ENCODE measurements at regions of chr2 and their contacts with region 1.

Region 1: GRCh38 chr2:72198532-72199241 is 51.0 kb upstream of the CYP26B1 start:
- DNase-seq: no peak
- H3K4me3 ChIP-seq: no peak overlapping the region
- H3K27ac ChIP-seq: no peak overlapping the region
- H3K4me1 ChIP-seq: 0 out of 2 replicates have a peak, but pooled peaks cover 5% of the 10 kb centered on the region
- H3K27me3 ChIP-seq: no peaks in the 10 kb centered on the region
- CTCF ChIP-seq: peak; percentile 38

Region 2: GRCh38 chr2:72148837-72149555 is 49.7 kb before region 1 on chr2:
- CTCF ChIA-PET with region 1: no interaction called
- POLR2A ChIA-PET with region 1: no interaction called
- intact Hi-C with region 1: no loop called
- DNase-seq: peak in 1 of 2 experiments; percentile 25
- H3K4me3 ChIP-seq: peak overlapping the region; percentile 62
- H3K27ac ChIP-seq: no peak overlapping the region
- H3K4me1 ChIP-seq: peaks cover 30% of the 10 kb centered on the region
- H3K27me3 ChIP-seq: peaks cover 11% of the 10 kb centered on the region; the same call in 1 of the 2 replicates
- CTCF ChIP-seq: no peak

Region 3: GRCh38 chr2:72222829-72223564 is 24.3 kb after region 1 on chr2:
- CTCF ChIA-PET with region 1: no interaction called
- POLR2A ChIA-PET with region 1: no interaction called
- intact Hi-C with region 1: no loop called
- DNase-seq: peak in 1 of 2 experiments; percentile 60
- H3K4me3 ChIP-seq: no peak overlapping the region
- H3K27ac ChIP-seq: no peak overlapping the region
- H3K4me1 ChIP-seq: peaks cover 15% of the 10 kb centered on the region
- H3K27me3 ChIP-seq: no peaks in the 10 kb centered on the region
- CTCF ChIP-seq: no peak

Region 4: DNA sequence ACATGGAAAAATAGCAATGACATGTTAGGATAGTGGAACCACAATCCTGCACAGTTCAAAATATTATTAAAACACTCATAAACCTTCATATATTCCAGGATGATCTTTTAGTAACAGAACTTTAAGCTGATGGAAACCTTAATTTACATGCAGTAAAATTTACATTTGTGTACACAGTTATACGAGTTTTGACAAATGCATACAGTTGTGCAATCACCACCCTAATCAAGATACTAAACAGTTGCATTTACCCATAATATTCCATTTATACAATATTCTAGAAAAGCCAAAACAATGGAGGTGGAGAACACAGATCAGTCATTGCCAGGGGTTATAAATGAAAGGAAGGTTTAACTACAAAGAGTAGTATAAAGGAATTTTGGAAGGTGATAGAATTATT is 509.5 kb after region 1 on chr2:
- CTCF ChIA-PET with region 1: no interaction called
- POLR2A ChIA-PET with region 1: interaction called, 11 read pairs
- intact Hi-C with region 1: no loop called
- DNase-seq: no peak
- H3K4me3 ChIP-seq: no peak overlapping the region
- H3K27ac ChIP-seq: no peak overlapping the region
- H3K4me1 ChIP-seq: no peaks in the 10 kb centered on the region
- H3K27me3 ChIP-seq: no peaks in the 10 kb centered on the region
- CTCF ChIP-seq: no peak

Region 5: GRCh38 chr2:73176881-73177644 is 978.4 kb after region 1 on chr2:
- CTCF ChIA-PET with region 1: interaction called, 11 read pairs
- POLR2A ChIA-PET with region 1: no interaction called
- intact Hi-C with region 1: no loop called
- DNase-seq: peak; percentile 63 to 83
- H3K4me3 ChIP-seq: peak overlapping the region; percentile 61
- H3K27ac ChIP-seq: no peak overlapping the region
- H3K4me1 ChIP-seq: peaks cover 19% of the 10 kb centered on the region
- H3K27me3 ChIP-seq: peaks cover 55% of the 10 kb centered on the region
- CTCF ChIP-seq: peak; percentile 99